Breast epithelium (tissue), 4 donors: ENCODE measurements at regions of chr18 and their contacts with region 1.

Region 1: DNA sequence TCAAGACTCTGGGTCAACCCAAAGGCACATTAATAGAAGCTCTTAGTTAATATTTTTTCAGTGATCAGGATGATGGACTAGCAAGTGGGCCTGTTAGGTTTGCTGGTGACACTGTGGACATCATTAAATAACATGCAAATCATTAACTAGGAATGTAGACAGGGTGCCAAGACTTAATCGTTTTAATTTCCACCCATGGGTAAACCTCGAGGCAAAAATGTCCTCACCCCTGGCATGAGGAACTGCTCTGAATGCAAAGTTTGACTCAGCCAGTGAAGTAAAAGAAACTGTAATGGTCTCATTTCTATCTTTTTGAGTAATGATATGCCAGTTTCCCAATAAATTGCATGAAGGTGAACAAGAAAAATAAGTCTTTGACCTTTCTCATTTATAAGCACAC is 152.6 kb upstream of the MEX3C start:
- DNase-seq: no peak
- H3K4me3 ChIP-seq: no peak overlapping the region
- H3K27ac ChIP-seq: no peak overlapping the region
- H3K4me1 ChIP-seq: no peaks in the 10 kb centered on the region
- H3K27me3 ChIP-seq: no peaks in the 10 kb centered on the region
- CTCF ChIP-seq: no peak
- POLR2A ChIP-seq: no peak

Region 2: DNA sequence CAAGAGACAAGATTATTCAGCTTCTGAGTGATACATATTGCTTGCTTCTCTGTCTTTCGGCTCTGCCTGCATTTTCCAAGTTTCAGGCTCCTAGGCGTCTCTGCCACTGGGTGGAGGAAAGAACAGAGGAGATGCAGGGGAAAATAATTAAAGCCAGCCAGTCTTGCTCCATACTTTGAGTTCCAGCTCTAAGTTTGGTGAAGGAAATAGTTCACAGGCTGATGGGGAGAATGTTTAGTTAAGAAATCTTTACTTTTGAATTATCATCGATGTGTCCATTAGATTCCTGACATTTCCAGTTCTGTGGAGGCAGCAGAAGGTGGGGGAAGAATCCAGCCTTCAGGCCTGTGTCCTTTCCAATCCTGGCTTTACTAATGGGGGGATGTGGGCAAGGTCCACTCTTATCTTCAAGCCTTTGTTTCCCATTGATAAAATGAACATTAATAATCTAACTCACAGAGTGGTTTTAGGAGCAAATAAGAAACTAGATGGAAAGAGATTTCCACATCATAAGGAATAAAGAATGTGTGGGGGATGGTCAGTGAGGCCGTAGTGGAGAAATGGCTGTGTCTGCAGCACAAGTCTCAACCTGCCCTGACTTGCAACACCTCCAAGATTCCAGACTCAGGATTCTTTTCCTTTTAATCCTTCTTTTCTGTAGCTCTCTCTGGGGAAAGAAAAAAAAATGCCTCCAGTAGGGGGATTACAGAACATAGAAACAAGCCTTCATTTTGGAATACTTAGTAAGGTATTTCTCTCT is 28.6 kb before region 1 on chr18:
- intact Hi-C with region 1: no loop called
- DNase-seq: peak in 1 of 2 donors; percentile 81
- H3K4me3 ChIP-seq: no peak overlapping the region
- H3K27ac ChIP-seq: peak overlapping the region; percentile 19 to 82
- H3K4me1 ChIP-seq: no peaks in the 10 kb centered on the region
- H3K27me3 ChIP-seq: no peaks in the 10 kb centered on the region
- CTCF ChIP-seq: no peak
- POLR2A ChIP-seq: no peak

Region 3: GRCh38 chr18:51654488-51655326 is 304.6 kb after region 1 on chr18:
- intact Hi-C with region 1: loop called (anchors 5 kb)
- DNase-seq: no peak
- H3K4me3 ChIP-seq: no peak overlapping the region
- H3K27ac ChIP-seq: no peak overlapping the region
- H3K4me1 ChIP-seq: no peaks in the 10 kb centered on the region
- H3K27me3 ChIP-seq: no peaks in the 10 kb centered on the region
- CTCF ChIP-seq: no peak
- POLR2A ChIP-seq: no peak